ENCODE measurements at regions of chr1 and their contacts with region 1.

Region 1: DNA sequence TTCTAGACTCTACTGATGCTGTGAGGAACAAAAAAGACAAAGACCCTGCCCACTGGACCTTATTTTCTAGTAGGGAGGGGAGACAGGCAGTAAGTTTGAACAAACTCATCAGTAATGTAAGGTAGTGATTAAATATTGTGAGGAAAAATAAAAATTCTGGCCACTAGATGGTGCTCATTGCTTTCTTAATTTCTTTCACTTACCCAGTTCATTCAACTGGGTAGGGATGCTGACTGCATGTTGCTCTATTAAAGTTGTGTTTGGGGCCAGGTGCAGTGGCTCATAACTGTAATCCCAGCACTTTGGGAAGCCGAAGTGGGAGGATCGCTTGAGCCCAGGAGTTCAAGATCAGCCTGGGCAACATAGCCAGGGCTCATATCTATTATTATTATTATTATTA is 6.3 kb upstream of the KYAT3 start:
- DNase-seq: peak; percentile 93
- ATAC-seq: peak; percentile 77
- H3K4me3 ChIP-seq: no peak overlapping the region
- H3K27ac ChIP-seq: no peak overlapping the region
- H3K4me1 ChIP-seq: peaks cover 12% of the 10 kb centered on the region
- H3K27me3 ChIP-seq: no peaks in the 10 kb centered on the region
- CTCF ChIP-seq: peak; percentile 55

Region 2: DNA sequence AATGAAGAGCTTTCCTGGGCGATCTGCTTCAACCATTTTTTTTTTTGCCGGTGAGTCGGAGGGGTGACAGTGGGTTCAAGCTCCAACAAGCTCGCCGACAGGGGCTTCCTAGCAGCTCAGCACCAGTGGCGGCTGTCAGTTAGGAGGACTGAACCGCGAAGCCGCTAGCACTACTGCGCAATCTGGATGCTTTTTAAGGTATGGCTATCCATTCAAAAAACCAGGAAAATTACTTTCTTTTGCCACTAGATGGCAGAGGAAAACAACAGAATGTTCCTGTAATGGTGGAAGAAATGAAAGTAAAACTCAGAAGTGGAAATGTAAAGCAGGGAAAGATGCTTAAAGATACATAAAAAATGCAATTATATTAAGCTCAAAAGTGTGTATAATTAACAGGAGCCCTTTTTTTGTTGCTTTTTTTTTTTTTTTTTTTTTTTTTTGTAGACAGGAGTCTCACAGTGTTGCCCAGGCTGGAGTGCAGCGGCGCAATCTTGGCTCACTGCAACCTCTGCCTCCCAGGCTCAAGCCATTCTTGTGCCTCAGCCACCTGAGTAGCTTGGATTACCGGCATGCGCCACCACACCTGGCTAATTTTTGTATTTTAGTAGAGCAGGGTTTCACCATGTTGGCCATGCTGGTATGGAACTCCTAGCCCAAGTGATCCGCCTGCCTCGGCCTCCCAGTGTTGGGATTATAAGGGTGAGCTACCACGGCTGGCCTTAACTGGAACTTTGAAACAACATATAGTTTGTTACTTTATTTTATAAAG is 14.7 kb before region 1 on chr1:
- CTCF ChIA-PET with region 1: interaction called, 12 read pairs
- POLR2A ChIA-PET with region 1: no interaction called
- intact Hi-C with region 1: no loop called
- DNase-seq: peak; percentile 84
- ATAC-seq: 0 out of 2 replicates have a peak, but pooled peaks have one; percentile 5
- H3K4me3 ChIP-seq: peak overlapping the region; percentile 25; the same call in 1 of the 2 replicates
- H3K27ac ChIP-seq: peak overlapping the region; percentile 86; the same call in 1 of the 2 replicates
- H3K4me1 ChIP-seq: peaks cover 48% of the 10 kb centered on the region
- H3K27me3 ChIP-seq: no peaks in the 10 kb centered on the region
- CTCF ChIP-seq: peak; percentile 69

Region 3: DNA sequence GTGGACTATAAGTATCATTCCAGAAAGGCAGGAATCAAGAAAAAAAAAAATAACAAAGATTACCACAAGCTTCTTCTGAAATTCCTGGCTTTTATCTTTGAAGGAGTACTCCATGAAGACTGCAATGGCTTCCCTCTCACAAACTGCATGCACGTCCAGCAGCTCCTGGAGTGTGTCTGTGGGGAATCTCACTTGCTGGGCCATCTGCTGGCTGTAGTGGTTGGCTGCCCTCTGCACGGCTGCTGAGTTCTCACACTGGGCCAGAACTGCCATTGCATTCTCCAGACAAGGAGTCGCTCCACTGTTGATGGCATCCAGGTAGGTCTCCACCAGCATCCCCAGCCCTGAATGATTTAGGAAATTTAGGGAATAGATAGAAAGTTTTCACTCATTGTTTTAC is 150.5 kb after region 1 on chr1:
- CTCF ChIA-PET with region 1: no interaction called
- POLR2A ChIA-PET with region 1: no interaction called
- intact Hi-C with region 1: loop called (anchors 2 kb)
- DNase-seq: peak; percentile 33
- ATAC-seq: peak; percentile 87
- H3K4me3 ChIP-seq: no peak overlapping the region
- H3K27ac ChIP-seq: no peak overlapping the region
- H3K4me1 ChIP-seq: no peaks in the 10 kb centered on the region
- H3K27me3 ChIP-seq: no peaks in the 10 kb centered on the region
- CTCF ChIP-seq: peak; percentile 43; the same call in 1 of the 2 replicates

Region 4: DNA sequence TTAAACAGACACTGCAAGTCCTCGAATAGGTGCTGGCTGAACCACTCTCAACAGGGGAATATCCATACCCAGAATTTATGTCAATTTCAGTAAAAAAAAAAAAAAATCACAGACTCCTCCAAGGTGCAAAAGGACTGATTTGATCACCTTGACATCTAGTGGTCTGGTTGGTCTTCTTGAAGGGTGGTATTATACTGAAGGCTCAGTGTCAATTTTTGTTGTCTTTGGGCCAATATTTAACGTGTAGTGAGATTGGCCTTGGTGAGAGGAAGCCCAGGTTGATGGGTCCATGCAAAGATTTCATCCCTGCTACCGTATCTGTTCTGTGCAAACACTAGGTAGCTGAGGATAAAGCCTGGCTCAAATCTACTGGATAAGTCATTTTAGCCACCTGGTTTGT is 278.0 kb after region 1 on chr1:
- CTCF ChIA-PET with region 1: interaction called, 6 read pairs
- POLR2A ChIA-PET with region 1: no interaction called
- intact Hi-C with region 1: loop called (anchors 1 kb)
- DNase-seq: peak; percentile 27
- ATAC-seq: peak; percentile 46; the same call in 1 of the 2 replicates
- H3K4me3 ChIP-seq: no peak overlapping the region
- H3K27ac ChIP-seq: no peak overlapping the region
- H3K4me1 ChIP-seq: peaks cover 15% of the 10 kb centered on the region
- H3K27me3 ChIP-seq: no peaks in the 10 kb centered on the region
- CTCF ChIP-seq: peak; percentile 50

Region 5: GRCh38 chr1:89358287-89358893 is 359.7 kb after region 1 on chr1:
- CTCF ChIA-PET with region 1: no interaction called
- POLR2A ChIA-PET with region 1: no interaction called
- intact Hi-C with region 1: loop called (anchors 1 kb)
- DNase-seq: peak; percentile 86
- ATAC-seq: peak; percentile 83
- H3K4me3 ChIP-seq: no peak overlapping the region
- H3K27ac ChIP-seq: no peak overlapping the region
- H3K4me1 ChIP-seq: peaks cover 20% of the 10 kb centered on the region
- H3K27me3 ChIP-seq: peaks cover 6% of the 10 kb centered on the region; the same call in 1 of the 2 replicates
- CTCF ChIP-seq: peak; percentile 87

Region 6: GRCh38 chr1:89454845-89455521 is 456.3 kb after region 1 on chr1:
- CTCF ChIA-PET with region 1: interaction called, 5 read pairs
- POLR2A ChIA-PET with region 1: no interaction called
- intact Hi-C with region 1: loop called (anchors 1 kb)
- DNase-seq: peak; percentile 81
- ATAC-seq: peak; percentile 89
- H3K4me3 ChIP-seq: peak overlapping the region; percentile 10; the same call in 1 of the 2 replicates
- H3K27ac ChIP-seq: no peak overlapping the region
- H3K4me1 ChIP-seq: peaks cover 8% of the 10 kb centered on the region
- H3K27me3 ChIP-seq: no peaks in the 10 kb centered on the region
- CTCF ChIP-seq: peak; percentile 70

Measured in PC-3 (cell line).